Heart right ventricle (tissue), 16 donors: ENCODE measurements at regions of chr3 and their contacts with region 1.

Region 1: DNA sequence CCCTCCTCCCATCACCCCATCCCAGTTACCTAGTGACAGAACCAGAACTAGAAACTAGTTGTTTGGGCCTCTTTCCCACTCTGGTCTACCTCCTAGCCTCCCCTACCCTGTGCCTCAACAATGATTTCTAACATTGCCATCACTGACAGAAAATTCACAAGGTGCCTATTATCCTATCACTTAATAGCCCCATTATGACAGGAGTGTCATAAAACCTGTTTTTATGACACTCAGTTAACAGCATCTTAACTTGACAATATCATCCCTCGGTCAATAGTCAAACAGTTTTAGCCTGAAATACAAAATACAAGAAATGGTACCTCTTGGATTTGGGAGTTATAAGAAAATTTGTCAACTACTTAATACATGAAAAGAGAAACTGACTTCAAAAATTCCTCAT is 46.5 kb downstream of the ULK4 start:
- DNase-seq: no peak
- ATAC-seq: no peak
- H3K4me3 ChIP-seq: no peak overlapping the region
- H3K27ac ChIP-seq: no peak overlapping the region
- H3K4me1 ChIP-seq: no peaks in the 10 kb centered on the region
- H3K27me3 ChIP-seq: no peaks in the 10 kb centered on the region
- CTCF ChIP-seq: no peak

Region 2: DNA sequence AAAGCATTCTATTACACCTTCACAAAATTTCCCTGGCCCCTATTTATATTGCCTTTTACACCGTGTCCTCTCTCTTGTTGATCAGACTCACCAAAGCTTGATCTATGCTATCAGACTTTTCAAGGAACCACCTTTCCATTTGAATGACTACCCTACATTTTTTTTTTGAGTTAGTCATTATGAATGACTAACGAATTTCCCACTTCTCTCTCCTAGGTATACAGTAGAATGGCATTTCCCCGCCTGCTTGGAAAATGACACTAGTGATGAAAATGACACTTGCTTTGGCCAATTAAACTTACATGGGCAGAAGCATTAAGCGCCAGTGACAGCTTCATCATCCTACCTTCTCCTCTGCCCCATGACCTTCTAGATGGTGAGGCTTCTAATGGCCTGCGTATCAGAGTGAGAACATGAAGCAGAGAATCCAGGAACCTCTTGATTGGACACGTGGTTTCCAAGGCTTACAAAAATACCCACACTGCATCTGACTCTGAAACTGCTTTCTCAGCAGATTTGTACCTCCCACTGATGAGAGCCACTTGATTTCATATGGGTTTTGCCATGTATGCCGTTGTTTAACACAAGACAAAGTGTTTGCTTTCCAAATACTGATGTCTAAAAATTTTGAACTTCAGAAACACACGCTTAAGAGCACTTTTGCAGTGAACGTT is 345.6 kb before region 1 on chr3:
- intact Hi-C with region 1: no loop called
- DNase-seq: no peak
- ATAC-seq: no peak
- H3K4me3 ChIP-seq: no peak overlapping the region
- H3K27ac ChIP-seq: no peak overlapping the region
- H3K4me1 ChIP-seq: peaks cover 0 to 7% (median 0%) of the 10 kb centered on the region in 9 donors
- H3K27me3 ChIP-seq: no peaks in the 10 kb centered on the region
- CTCF ChIP-seq: no peak

Region 3: GRCh38 chr3:41997702-41998550 is 82.6 kb after region 1 on chr3:
- intact Hi-C with region 1: loop called in 1 of 10 experiments (anchors 10 kb)
- DNase-seq: no peak
- ATAC-seq: peak in 7 of 8 donors; percentile 41 to 73 (median 58)
- H3K4me3 ChIP-seq: no peak overlapping the region
- H3K27ac ChIP-seq: peak overlapping the region in 2 of 10 donors; percentile 2 to 50
- H3K4me1 ChIP-seq: peaks cover 0 to 17% (median 12%) of the 10 kb centered on the region in 9 donors
- H3K27me3 ChIP-seq: no peaks in the 10 kb centered on the region
- CTCF ChIP-seq: peak; percentile 30 to 63 (median 47)